MCF 10A (cell line): ENCODE measurements at regions of chr3 and their contacts with region 1.

Region 1: DNA sequence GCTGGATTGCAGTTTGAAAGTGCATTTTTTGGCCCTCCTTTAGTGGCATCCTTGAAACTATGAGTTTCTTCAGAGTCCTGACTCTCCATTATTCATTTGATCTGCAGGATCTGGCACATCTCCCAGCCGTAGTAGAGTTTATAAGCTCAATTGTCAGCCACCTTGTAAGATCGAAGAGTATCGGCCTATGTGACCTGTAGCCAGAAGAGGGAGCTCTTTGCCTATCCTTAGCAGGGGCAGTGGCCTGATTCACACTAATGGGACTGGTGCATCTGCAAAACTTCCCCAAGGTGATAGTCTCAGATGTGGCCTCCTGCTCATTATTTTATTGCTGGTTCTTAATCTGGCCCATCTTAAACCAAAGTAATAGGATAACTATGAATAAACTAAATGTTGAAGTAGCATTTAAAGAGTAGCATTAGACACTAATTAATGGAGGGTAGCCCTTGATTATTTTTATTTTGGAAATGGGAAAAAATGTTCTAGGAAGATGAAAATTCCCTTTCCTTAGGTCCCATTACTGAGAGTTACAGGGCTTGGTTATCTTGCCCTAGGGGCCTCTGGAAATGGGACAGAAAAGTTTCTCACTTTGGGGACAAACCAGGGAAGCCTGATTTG is 21.2 kb downstream of the GCSAM start:
- DNase-seq: peak; percentile 82
- H3K4me3 Mint-ChIP-seq: no peak overlapping the region
- H3K27ac Mint-ChIP-seq: no peak overlapping the region
- H3K4me1 Mint-ChIP-seq: peaks cover 16% of the 10 kb centered on the region
- H3K27me3 Mint-ChIP-seq: no peaks in the 10 kb centered on the region
- CTCF ChIP-seq: peak; percentile 80

Region 2: GRCh38 chr3:111851511-111851954 is 260.4 kb before region 1 on chr3:
- CTCF ChIA-PET with region 1: no interaction called
- POLR2A ChIA-PET with region 1: no interaction called
- intact Hi-C with region 1: no loop called
- DNase-seq: peak; percentile 87
- H3K4me3 Mint-ChIP-seq: no peak overlapping the region
- H3K27ac Mint-ChIP-seq: peak overlapping the region; percentile 77
- H3K4me1 Mint-ChIP-seq: peaks cover 37% of the 10 kb centered on the region
- H3K27me3 Mint-ChIP-seq: no peaks in the 10 kb centered on the region
- CTCF ChIP-seq: no peak

Region 3: GRCh38 chr3:112074721-112075497 is 37.0 kb before region 1 on chr3:
- CTCF ChIA-PET with region 1: interaction called, 11 read pairs
- POLR2A ChIA-PET with region 1: no interaction called
- intact Hi-C with region 1: loop called (anchors 1 kb)
- DNase-seq: peak; percentile 94
- H3K4me3 Mint-ChIP-seq: peak overlapping the region; percentile 68
- H3K27ac Mint-ChIP-seq: peak overlapping the region; percentile 97
- H3K4me1 Mint-ChIP-seq: peaks cover 25% of the 10 kb centered on the region
- H3K27me3 Mint-ChIP-seq: no peaks in the 10 kb centered on the region
- CTCF ChIP-seq: no peak

Region 4: DNA sequence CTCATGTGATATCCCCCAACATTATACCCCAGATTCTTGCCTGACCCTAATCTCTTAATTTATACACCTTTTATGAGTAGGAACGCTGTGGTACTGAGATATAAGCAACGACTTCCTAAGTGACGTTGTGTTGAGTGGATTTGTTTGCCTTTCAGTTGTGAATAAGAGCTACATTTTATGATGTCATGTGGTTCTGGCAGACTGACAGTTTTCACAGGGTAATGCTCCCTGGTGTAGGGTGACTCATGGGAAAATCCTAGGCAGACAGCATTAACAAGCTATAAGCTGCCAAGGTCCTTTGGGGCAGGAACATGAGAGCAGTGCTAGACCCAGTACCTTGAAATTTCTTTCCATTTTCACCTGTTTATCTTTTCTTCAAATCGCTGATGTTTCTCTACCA is 14.5 kb before region 1 on chr3:
- CTCF ChIA-PET with region 1: interaction called, 19 read pairs
- POLR2A ChIA-PET with region 1: interaction called, 4 read pairs
- intact Hi-C with region 1: no loop called
- DNase-seq: peak; percentile 99
- H3K4me3 Mint-ChIP-seq: peak overlapping the region; percentile 24
- H3K27ac Mint-ChIP-seq: peak overlapping the region; percentile 88
- H3K4me1 Mint-ChIP-seq: peaks cover 42% of the 10 kb centered on the region
- H3K27me3 Mint-ChIP-seq: no peaks in the 10 kb centered on the region
- CTCF ChIP-seq: no peak

Region 5: GRCh38 chr3:112128843-112129727 is 17.2 kb after region 1 on chr3:
- CTCF ChIA-PET with region 1: interaction called, 42 read pairs
- POLR2A ChIA-PET with region 1: interaction called, 4 read pairs
- intact Hi-C with region 1: no loop called
- DNase-seq: peak; percentile 78
- H3K4me3 Mint-ChIP-seq: peak overlapping the region; percentile 55
- H3K27ac Mint-ChIP-seq: peak overlapping the region; percentile 97
- H3K4me1 Mint-ChIP-seq: peaks cover 36% of the 10 kb centered on the region
- H3K27me3 Mint-ChIP-seq: no peaks in the 10 kb centered on the region
- CTCF ChIP-seq: no peak

Region 6: DNA sequence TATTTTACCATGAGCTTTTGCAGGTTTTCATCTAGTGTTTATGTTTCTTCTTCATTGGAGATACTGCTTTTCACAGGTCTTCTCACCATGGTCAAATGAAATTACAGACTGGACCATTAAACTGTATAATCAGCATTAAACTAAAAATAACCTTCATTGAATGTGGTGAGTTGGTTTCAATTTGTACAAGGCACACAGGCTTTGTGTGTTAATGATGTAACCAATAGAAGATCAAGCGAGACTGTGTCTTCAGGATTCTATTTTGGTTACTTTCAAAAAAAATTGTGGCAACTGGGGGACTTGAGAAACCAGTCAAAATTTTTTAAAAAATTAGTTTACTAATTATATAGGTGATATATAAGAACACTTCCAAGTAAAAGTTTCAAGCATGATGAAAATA is 75.4 kb after region 1 on chr3:
- CTCF ChIA-PET with region 1: no interaction called
- POLR2A ChIA-PET with region 1: no interaction called
- intact Hi-C with region 1: no loop called
- DNase-seq: no peak
- H3K4me3 Mint-ChIP-seq: no peak overlapping the region
- H3K27ac Mint-ChIP-seq: no peak overlapping the region
- H3K4me1 Mint-ChIP-seq: no peaks in the 10 kb centered on the region
- H3K27me3 Mint-ChIP-seq: no peaks in the 10 kb centered on the region
- CTCF ChIP-seq: no peak

Region 7: GRCh38 chr3:112519424-112520001 is 407.6 kb after region 1 on chr3:
- CTCF ChIA-PET with region 1: interaction called, 31 read pairs
- POLR2A ChIA-PET with region 1: no interaction called
- intact Hi-C with region 1: loop called (anchors 2 kb)
- DNase-seq: peak; percentile 66
- H3K4me3 Mint-ChIP-seq: no peak overlapping the region
- H3K27ac Mint-ChIP-seq: no peak overlapping the region
- H3K4me1 Mint-ChIP-seq: no peaks in the 10 kb centered on the region
- H3K27me3 Mint-ChIP-seq: no peaks in the 10 kb centered on the region
- CTCF ChIP-seq: peak; percentile 69

Region 8: GRCh38 chr3:112531358-112531781 is 419.5 kb after region 1 on chr3:
- CTCF ChIA-PET with region 1: interaction called, 7 read pairs
- POLR2A ChIA-PET with region 1: no interaction called
- intact Hi-C with region 1: loop called (anchors 1 kb)
- DNase-seq: peak; percentile 34
- H3K4me3 Mint-ChIP-seq: no peak overlapping the region
- H3K27ac Mint-ChIP-seq: no peak overlapping the region
- H3K4me1 Mint-ChIP-seq: no peaks in the 10 kb centered on the region
- H3K27me3 Mint-ChIP-seq: no peaks in the 10 kb centered on the region
- CTCF ChIP-seq: peak; percentile 42

Region 9: GRCh38 chr3:113002679-113003078 is 890.8 kb after region 1 on chr3:
- CTCF ChIA-PET with region 1: no interaction called
- POLR2A ChIA-PET with region 1: no interaction called
- intact Hi-C with region 1: no loop called
- DNase-seq: no peak
- H3K4me3 Mint-ChIP-seq: no peak overlapping the region
- H3K27ac Mint-ChIP-seq: no peak overlapping the region
- H3K4me1 Mint-ChIP-seq: no peaks in the 10 kb centered on the region
- H3K27me3 Mint-ChIP-seq: no peaks in the 10 kb centered on the region
- CTCF ChIP-seq: no peak